Activated T-helper 1 cell treated with anti-CD3 and anti-CD28 coated beads, Interleukin-12 subunit alpha, Interleukin-12 subunit beta, Interleukin-2, Interleukin-4 antibody, amounts not matched to agents 30 ng/mL and 10 ng/mL and 1 ng/mL, durations not matched to agents 14 hours and 24 hours and 36 hours (primary cell): ENCODE measurements at regions of chr7 and their contacts with region 1.

Region 1: GRCh38 chr7:7920481-7920880 is 48.1 kb upstream of the GLCCI1 start:
- DNase-seq: peak; percentile 12
- H3K4me3 Mint-ChIP-seq: no peak overlapping the region
- H3K27ac Mint-ChIP-seq: no peak overlapping the region
- H3K4me1 Mint-ChIP-seq: peaks cover 44% of the 10 kb centered on the region
- H3K27me3 Mint-ChIP-seq: peaks cover 3% of the 10 kb centered on the region

Region 2: GRCh38 chr7:7772397-7772821 is 148.1 kb before region 1 on chr7:
- intact Hi-C with region 1: loop called (anchors 1 kb)
- DNase-seq: no peak
- H3K4me3 Mint-ChIP-seq: peak overlapping the region; percentile 54
- H3K27ac Mint-ChIP-seq: peak overlapping the region; percentile 42
- H3K4me1 Mint-ChIP-seq: peaks cover 23% of the 10 kb centered on the region
- H3K27me3 Mint-ChIP-seq: peaks cover 3% of the 10 kb centered on the region

Region 3: GRCh38 chr7:7816084-7816483 is 104.4 kb before region 1 on chr7:
- intact Hi-C with region 1: loop called (anchors 2 kb)
- DNase-seq: peak; percentile 7
- H3K4me3 Mint-ChIP-seq: peak overlapping the region; percentile 56
- H3K27ac Mint-ChIP-seq: peak overlapping the region; percentile 27
- H3K4me1 Mint-ChIP-seq: peaks cover 41% of the 10 kb centered on the region
- H3K27me3 Mint-ChIP-seq: peaks cover 2% of the 10 kb centered on the region

Region 4: DNA sequence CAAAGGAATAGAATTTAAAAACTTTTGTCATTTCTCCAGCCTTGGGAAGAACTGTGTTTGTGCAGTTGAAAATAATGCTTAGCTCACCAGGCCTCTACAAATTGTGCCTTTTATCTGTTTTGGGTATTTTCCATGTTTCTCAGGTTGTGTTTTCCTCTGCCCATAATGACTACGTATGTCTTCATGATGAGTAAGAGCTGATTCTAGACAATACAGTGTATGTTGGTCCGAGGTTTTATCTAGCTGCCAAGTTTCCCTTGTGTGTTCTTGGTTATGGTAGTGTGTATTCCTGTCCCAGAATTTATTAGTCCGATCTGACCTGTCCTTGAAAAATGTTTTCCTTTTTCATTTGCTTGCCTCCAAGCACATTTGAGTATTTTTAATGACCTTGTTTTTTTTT is 35.6 kb before region 1 on chr7:
- intact Hi-C with region 1: no loop called
- DNase-seq: no peak
- H3K4me3 Mint-ChIP-seq: no peak overlapping the region
- H3K27ac Mint-ChIP-seq: no peak overlapping the region
- H3K4me1 Mint-ChIP-seq: no peaks in the 10 kb centered on the region
- H3K27me3 Mint-ChIP-seq: no peaks in the 10 kb centered on the region

Region 5: DNA sequence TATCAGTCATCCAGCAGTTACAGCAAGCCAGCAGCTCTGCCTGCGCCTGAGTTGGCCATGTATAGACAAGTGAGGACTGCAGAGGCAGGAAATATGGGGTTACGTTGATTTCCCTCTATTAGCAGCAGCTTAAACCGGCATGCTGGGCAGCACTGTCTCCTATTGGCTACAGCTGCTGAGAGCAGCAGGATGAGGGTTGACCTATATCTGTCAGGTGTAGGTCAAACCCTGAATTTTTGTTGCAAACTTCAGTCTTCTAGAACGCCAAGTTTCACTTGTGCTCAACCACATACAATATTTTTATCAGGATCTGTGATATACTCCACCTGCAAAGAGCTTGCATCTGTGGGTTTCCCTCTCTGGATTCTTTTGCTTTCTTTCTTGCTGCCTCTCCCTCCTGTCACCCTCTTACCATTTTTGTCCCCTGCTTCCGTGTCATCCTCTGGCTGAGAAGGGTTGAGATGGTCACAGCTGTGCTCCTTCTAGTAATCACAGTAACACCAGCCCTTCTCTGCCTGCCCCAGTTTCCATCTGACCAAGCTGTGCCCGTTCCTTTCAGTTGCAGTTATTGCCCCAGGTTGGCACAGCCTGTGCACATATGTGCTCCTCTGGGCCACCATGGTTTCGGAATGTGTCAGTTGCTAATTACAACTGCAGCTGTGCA is 24.3 kb after region 1 on chr7:
- intact Hi-C with region 1: loop called (anchors 1 kb)
- DNase-seq: peak; percentile 38
- H3K4me3 Mint-ChIP-seq: peak overlapping the region; percentile 68
- H3K27ac Mint-ChIP-seq: peak overlapping the region; percentile 74
- H3K4me1 Mint-ChIP-seq: peaks cover 15% of the 10 kb centered on the region
- H3K27me3 Mint-ChIP-seq: peaks cover 5% of the 10 kb centered on the region

Region 6: GRCh38 chr7:8125680-8126444 is 205.4 kb after region 1 on chr7:
- intact Hi-C with region 1: loop called (anchors 1 kb)
- DNase-seq: peak; percentile 69
- H3K4me3 Mint-ChIP-seq: peak overlapping the region; percentile 64
- H3K27ac Mint-ChIP-seq: peak overlapping the region; percentile 98
- H3K4me1 Mint-ChIP-seq: peaks cover 82% of the 10 kb centered on the region
- H3K27me3 Mint-ChIP-seq: peaks cover 5% of the 10 kb centered on the region

Region 7: DNA sequence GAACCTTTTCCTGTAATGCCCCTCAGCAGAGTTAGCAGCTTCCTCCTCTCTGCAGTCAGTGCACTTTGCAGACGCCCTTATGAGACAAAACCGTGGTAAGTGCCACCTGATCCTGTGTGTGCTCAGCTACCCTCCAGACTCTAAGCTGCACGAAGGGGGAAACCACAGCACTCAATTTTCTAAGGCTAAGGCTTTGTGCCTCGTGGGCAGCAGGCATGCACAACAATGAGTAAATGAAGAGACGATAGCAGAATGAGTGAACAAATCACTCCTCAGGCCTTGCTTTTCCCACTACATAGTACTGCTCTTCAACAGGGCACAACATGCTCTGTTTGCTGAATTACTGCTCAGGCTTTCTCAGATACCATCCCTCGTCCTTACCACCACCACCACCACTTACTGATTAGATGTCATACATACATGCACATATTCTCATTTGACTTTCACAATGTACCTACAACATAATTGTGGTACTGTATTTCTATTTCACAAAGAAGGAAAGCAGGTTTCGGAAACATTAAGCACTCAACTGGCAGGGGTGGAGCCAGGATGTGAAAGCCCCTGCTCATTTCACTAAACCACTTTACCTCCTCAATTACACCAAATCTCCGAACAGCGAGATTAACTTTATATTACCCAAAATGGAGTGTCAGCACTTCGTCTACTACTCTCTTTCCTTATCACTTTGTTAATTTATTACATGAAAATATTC is 256.0 kb after region 1 on chr7:
- intact Hi-C with region 1: loop called (anchors 2 kb)
- DNase-seq: peak; percentile 60
- H3K4me3 Mint-ChIP-seq: peak overlapping the region; percentile 76
- H3K27ac Mint-ChIP-seq: peak overlapping the region; percentile 99
- H3K4me1 Mint-ChIP-seq: peaks cover 53% of the 10 kb centered on the region
- H3K27me3 Mint-ChIP-seq: peaks cover 2% of the 10 kb centered on the region

Region 8: DNA sequence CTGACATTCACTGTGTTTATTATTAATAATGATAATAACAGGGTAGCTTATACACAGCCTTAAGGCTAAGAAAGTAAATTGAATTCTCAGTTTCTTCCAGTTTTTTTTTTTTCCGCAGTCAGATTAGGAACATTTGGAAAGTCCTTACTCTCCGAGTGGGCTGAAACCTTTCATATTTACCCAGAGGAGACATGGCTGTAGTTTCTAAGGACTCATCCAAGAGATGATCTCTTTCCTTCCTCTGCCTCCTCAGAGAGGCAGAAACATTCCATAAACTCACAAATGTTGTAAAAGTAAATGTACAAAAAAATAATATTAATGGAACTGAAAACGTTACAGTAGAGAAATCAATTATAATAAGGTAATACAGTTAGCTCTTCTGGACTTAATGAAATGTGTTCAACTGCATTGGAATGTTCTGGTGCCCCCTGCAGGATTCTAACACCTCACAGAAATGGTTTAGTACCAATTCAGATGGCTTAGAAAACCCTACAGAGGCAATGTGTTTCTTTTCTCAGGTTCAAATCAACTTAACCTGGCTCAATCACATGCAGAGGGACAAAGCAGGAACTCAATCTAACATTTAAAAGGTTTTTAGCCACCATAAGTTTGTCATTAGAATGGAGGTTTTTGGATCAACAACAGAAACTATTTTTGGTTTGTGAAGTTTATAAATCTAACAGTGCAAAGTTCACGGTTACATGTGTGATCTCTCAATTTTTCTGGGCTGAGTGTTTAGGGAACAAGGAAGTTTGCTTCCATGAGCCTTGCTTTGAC is 269.8 kb after region 1 on chr7:
- intact Hi-C with region 1: loop called (anchors 5 kb)
- DNase-seq: peak; percentile 41
- H3K4me3 Mint-ChIP-seq: no peak overlapping the region
- H3K27ac Mint-ChIP-seq: no peak overlapping the region
- H3K4me1 Mint-ChIP-seq: peaks cover 41% of the 10 kb centered on the region
- H3K27me3 Mint-ChIP-seq: peaks cover 5% of the 10 kb centered on the region